Breast epithelium (tissue), 4 donors: ENCODE measurements at regions of chr6 and their contacts with region 1.

Region 1: GRCh38 chr6:33696548-33697518 is 14.7 kb downstream of the UQCC2 start:
- DNase-seq: peak in 1 of 2 donors; percentile 64
- H3K4me3 ChIP-seq: peak overlapping the region in 1 of 3 donors; percentile 13
- H3K27ac ChIP-seq: peak overlapping the region; percentile 68 to 76
- H3K4me1 ChIP-seq: peaks cover 15 to 40% of the 10 kb centered on the region in 2 donors
- H3K27me3 ChIP-seq: no peaks in the 10 kb centered on the region
- CTCF ChIP-seq: no peak
- POLR2A ChIP-seq: no peak

Region 2: GRCh38 chr6:33579828-33580714 is 116.8 kb before region 1 on chr6 and contains the start of gene BAK1:
- intact Hi-C with region 1: loop called (anchors 10 kb)
- DNase-seq: peak; percentile 83 to 86
- H3K4me3 ChIP-seq: peak within 1 kb of the TSS; percentile 76 to 83 (median 83)
- H3K27ac ChIP-seq: peak within 1 kb of the TSS; percentile 88 to 91
- H3K4me1 ChIP-seq: peaks cover 0 to 3% of the 10 kb centered on the region in 2 donors
- H3K27me3 ChIP-seq: no peaks in the 10 kb centered on the region
- CTCF ChIP-seq: peak; percentile 26 to 47 (median 35)
- POLR2A ChIP-seq: no peak
- total RNA-seq, gene BAK1: 6.7 to 11.1 (median 7.0) TPM

Region 3: DNA sequence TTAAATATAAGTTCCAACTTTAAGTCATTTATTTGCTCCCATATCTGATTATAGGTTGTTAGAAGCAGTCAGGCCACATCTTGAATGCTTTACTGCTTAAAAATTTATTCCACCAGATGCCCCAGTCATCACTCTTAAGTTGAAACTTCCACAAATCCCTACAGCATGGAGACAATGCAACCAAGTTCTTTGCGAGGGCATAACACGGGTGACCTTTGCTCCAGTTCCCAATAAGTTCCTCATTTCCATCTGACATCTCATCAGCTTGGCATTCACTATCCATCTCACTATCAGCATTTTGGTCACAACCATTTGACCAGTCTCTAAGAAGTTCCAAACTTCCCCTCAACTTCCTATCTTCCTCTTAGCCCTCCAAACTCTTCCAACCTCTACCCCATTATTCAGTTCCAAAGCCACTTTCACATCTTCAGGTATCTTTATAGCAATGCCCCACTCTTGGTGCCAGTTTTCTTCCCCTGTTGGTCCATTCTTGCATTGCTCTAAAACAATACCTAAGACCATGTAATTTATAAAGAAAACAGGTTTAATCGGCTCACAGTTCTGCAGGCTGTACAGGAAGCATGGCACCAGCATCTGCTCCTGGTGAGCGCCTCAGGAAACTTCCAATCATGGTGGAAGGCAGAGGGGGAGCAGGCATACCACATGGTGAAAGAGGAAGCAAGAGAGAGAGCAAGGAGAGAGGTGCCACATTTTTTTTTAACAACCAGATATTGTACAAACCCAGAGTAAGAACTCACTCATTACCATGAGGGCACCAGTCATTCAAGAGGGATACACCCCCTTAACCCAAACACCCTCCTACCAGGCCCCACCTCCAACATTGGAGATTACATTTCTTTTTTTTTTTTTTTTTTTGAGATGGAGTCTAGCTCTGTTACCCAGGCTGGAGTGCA is 91.6 kb before region 1 on chr6:
- intact Hi-C with region 1: loop called (anchors 5 kb)
- DNase-seq: no peak
- H3K4me3 ChIP-seq: no peak overlapping the region
- H3K27ac ChIP-seq: no peak overlapping the region
- H3K4me1 ChIP-seq: no peaks in the 10 kb centered on the region
- H3K27me3 ChIP-seq: no peaks in the 10 kb centered on the region
- CTCF ChIP-seq: no peak
- POLR2A ChIP-seq: no peak

Region 4: GRCh38 chr6:33620856-33621710 is 75.8 kb before region 1 on chr6 and contains the start of gene ITPR3:
- intact Hi-C with region 1: no loop called
- DNase-seq: no peak
- H3K4me3 ChIP-seq: peak within 1 kb of the TSS; percentile 67 to 86 (median 73)
- H3K27ac ChIP-seq: peak within 1 kb of the TSS; percentile 90 to 91
- H3K4me1 ChIP-seq: no peaks in the 10 kb centered on the region
- H3K27me3 ChIP-seq: no peaks in the 10 kb centered on the region
- CTCF ChIP-seq: no peak
- POLR2A ChIP-seq: no peak
- total RNA-seq, gene ITPR3: 18.4 to 40.0 (median 27.7) TPM